Activated CD4-positive, alpha-beta memory T cell treated with anti-CD3 and anti-CD28 coated beads for 36 hours (primary cell): ENCODE measurements at regions of chr2 and their contacts with region 1.

Region 1: GRCh38 chr2:227817850-227818674 is 4.4 kb downstream of the CCL20 start:
- DNase-seq: peak; percentile 94
- H3K4me3 Mint-ChIP-seq: peak overlapping the region; percentile 42
- H3K27ac Mint-ChIP-seq: peak overlapping the region; percentile 79
- H3K4me1 Mint-ChIP-seq: peaks cover 39% of the 10 kb centered on the region
- H3K27me3 Mint-ChIP-seq: peaks cover 5% of the 10 kb centered on the region

Region 2: GRCh38 chr2:227370791-227371312 is 447.2 kb before region 1 on chr2:
- CTCF ChIA-PET with region 1: no interaction called
- POLR2A ChIA-PET with region 1: no interaction called
- intact Hi-C with region 1: loop called (anchors 1 kb)
- DNase-seq: peak; percentile 37
- H3K4me3 Mint-ChIP-seq: no peak overlapping the region
- H3K27ac Mint-ChIP-seq: no peak overlapping the region
- H3K4me1 Mint-ChIP-seq: peaks cover 8% of the 10 kb centered on the region
- H3K27me3 Mint-ChIP-seq: no peaks in the 10 kb centered on the region

Region 3: DNA sequence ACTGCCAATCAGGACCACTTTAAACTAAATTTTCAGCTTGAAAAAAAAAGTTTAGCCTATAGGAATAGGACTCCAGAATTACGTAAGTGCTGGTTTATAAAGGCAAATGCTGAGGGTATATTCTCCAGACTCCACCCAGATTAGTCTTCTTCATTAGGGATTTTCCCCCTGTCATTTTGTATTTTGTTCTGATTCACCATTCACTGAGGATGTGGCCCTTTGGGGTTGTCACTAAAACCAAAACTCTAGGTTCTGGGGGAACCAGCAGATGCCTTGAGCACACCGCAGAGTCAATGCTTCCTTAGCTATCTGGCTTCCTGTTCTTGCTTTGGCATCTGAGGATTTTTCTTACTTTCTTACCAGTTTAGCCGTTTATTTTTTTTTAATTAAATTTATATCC is 190.3 kb before region 1 on chr2:
- CTCF ChIA-PET with region 1: no interaction called
- POLR2A ChIA-PET with region 1: no interaction called
- intact Hi-C with region 1: no loop called
- DNase-seq: peak; percentile 58
- H3K4me3 Mint-ChIP-seq: no peak overlapping the region
- H3K27ac Mint-ChIP-seq: no peak overlapping the region
- H3K4me1 Mint-ChIP-seq: no peaks in the 10 kb centered on the region
- H3K27me3 Mint-ChIP-seq: peaks cover 27% of the 10 kb centered on the region

Region 4: DNA sequence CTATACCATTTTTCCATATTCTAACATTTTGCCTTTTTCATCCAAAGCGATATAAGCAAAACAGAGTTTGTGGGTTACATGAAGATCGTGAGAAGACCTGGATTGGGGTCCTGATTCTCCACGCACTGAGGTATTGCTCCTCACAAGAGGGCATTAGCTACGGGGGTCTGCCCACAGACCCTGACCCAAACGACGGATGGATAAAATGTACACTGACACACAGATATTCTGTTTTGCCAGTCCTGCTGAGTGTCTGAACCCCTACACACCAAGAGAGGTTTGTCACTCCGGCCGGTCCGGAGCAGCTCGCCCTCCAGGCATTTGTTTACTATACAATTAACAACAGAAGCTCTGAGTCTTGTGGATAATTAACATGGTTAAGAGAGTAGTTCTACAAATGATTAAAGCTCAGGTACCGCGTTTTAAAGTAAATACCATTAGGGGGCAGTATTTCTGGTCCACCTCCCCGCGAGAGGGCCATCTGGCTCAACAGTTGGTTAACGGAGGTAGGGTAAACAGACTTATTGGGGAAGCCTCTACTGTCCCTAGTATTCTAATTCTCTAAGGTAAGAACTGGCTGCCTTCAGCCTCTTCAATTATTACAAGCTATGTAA is 43.9 kb before region 1 on chr2:
- CTCF ChIA-PET with region 1: interaction called, 3 read pairs
- POLR2A ChIA-PET with region 1: interaction called, 3 read pairs
- intact Hi-C with region 1: loop called (anchors 1 kb)
- DNase-seq: peak; percentile 37
- H3K4me3 Mint-ChIP-seq: no peak overlapping the region
- H3K27ac Mint-ChIP-seq: peak overlapping the region; percentile 50
- H3K4me1 Mint-ChIP-seq: peaks cover 16% of the 10 kb centered on the region
- H3K27me3 Mint-ChIP-seq: no peaks in the 10 kb centered on the region

Region 5: DNA sequence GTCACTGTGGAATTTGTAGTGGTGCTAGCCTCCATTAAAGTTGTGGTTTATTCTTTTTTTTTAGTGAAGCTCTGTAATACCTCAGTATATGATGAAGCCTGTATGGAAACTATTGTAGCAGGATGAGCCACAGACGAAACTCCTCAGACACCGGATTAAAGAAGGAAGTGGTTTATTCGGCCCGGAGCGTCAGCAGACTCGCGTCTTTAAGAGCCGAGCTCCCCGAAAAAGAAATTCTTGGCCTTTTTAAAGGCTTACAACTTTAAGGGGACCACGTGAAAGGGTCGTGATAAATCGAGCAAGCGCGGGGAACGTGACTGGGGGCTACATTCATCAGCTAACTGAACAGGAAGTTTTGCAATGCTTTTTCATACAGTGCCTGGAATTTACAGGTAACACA is 12.5 kb before region 1 on chr2:
- CTCF ChIA-PET with region 1: interaction called, 6 read pairs
- POLR2A ChIA-PET with region 1: interaction called, 29 read pairs
- intact Hi-C with region 1: loop called (anchors 1 kb)
- DNase-seq: peak; percentile 66
- H3K4me3 Mint-ChIP-seq: peak overlapping the region; percentile 72
- H3K27ac Mint-ChIP-seq: peak overlapping the region; percentile 81
- H3K4me1 Mint-ChIP-seq: peaks cover 14% of the 10 kb centered on the region
- H3K27me3 Mint-ChIP-seq: peaks cover 1% of the 10 kb centered on the region

Region 6: GRCh38 chr2:227862227-227862740 is 44.2 kb after region 1 on chr2:
- CTCF ChIA-PET with region 1: interaction called, 9 read pairs
- POLR2A ChIA-PET with region 1: no interaction called
- intact Hi-C with region 1: loop called (anchors 1 kb)
- DNase-seq: no peak
- H3K4me3 Mint-ChIP-seq: no peak overlapping the region
- H3K27ac Mint-ChIP-seq: no peak overlapping the region
- H3K4me1 Mint-ChIP-seq: no peaks in the 10 kb centered on the region
- H3K27me3 Mint-ChIP-seq: no peaks in the 10 kb centered on the region